ENCODE measurements at regions of chr1 and their contacts with region 1.

Region 1: DNA sequence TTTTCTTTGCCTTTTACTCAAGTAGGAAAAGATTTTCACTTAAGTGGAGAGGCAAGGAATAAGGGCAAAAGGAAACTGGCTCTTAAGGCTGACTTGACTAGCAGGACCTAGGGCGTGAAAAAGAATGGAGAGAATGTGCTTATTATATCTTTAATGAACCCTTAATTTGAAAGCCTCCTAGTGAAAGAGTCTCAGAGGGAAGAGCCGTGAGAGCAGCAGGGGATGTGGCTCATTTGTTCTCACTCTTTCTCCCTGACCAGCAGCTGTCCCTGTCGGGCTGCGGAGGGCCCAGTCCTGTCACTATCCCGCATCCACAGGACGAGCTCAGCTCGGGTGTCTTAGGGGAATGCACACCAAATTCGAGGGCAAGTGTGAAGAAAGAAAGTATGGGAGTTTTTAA is 180.1 kb downstream of the EDEM3 start:
- DNase-seq: no peak
- ATAC-seq: no peak
- H3K4me3 ChIP-seq: no peak overlapping the region
- H3K27ac ChIP-seq: no peak overlapping the region
- H3K4me1 ChIP-seq: no peaks in the 10 kb centered on the region
- H3K27me3 ChIP-seq: no peaks in the 10 kb centered on the region
- CTCF ChIP-seq: no peak

Region 2: DNA sequence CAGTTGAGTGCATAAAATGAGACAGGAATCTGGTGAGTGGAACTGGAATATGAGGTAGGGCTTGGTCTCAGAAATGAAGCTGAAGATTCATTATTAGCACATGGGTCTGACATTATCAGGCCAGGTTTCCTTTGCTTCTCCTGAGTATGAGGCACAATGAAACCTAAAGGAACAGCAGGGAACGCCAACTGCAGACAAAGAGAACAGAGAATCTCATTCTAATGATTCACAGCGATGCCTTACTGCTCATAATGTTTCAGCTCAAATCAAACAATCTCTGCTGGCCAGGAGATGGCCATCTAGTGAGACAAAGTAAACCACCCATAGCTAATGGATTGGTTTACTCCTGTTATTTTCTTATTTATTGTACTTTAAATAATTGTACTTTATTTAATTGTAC is 54.3 kb before region 1 on chr1:
- CTCF ChIA-PET with region 1: no interaction called
- POLR2A ChIA-PET with region 1: interaction called, 18 read pairs
- intact Hi-C with region 1: no loop called
- DNase-seq: no peak
- ATAC-seq: no peak
- H3K4me3 ChIP-seq: no peak overlapping the region
- H3K27ac ChIP-seq: no peak overlapping the region
- H3K4me1 ChIP-seq: no peaks in the 10 kb centered on the region
- H3K27me3 ChIP-seq: no peaks in the 10 kb centered on the region
- CTCF ChIP-seq: no peak

Region 3: GRCh38 chr1:184610876-184611595 is 36.4 kb after region 1 on chr1:
- CTCF ChIA-PET with region 1: no interaction called
- POLR2A ChIA-PET with region 1: no interaction called
- intact Hi-C with region 1: no loop called
- DNase-seq: no peak
- ATAC-seq: no peak
- H3K4me3 ChIP-seq: no peak overlapping the region
- H3K27ac ChIP-seq: no peak overlapping the region
- H3K4me1 ChIP-seq: peaks cover 2% of the 10 kb centered on the region; the same call in 1 of the 2 replicates
- H3K27me3 ChIP-seq: no peaks in the 10 kb centered on the region
- CTCF ChIP-seq: no peak

Region 4: GRCh38 chr1:186498695-186499389 is 1924.3 kb after region 1 on chr1:
- CTCF ChIA-PET with region 1: no interaction called
- POLR2A ChIA-PET with region 1: no interaction called
- intact Hi-C with region 1: no loop called
- DNase-seq: peak; percentile 75
- ATAC-seq: peak; percentile 68
- H3K4me3 ChIP-seq: no peak overlapping the region
- H3K27ac ChIP-seq: peak overlapping the region; percentile 91
- H3K4me1 ChIP-seq: peaks cover 54% of the 10 kb centered on the region
- H3K27me3 ChIP-seq: no peaks in the 10 kb centered on the region
- CTCF ChIP-seq: no peak